ENCODE measurements at regions of chr14 and their contacts with region 1.

Region 1: GRCh38 chr14:92513204-92513973 is at the start of gene RIN3:
- DNase-seq: peak; percentile 70 to 82 (median 77)
- H3K4me3 ChIP-seq: peak within 1 kb of the TSS; percentile 65 to 92 (median 91)
- H3K4me3 Mint-ChIP-seq: peak within 1 kb of the TSS; percentile 86 to 89
- H3K27ac ChIP-seq: peak within 1 kb of the TSS; percentile 55 to 95
- H3K27ac Mint-ChIP-seq: peak within 1 kb of the TSS; percentile 57 to 92 (median 90)
- H3K4me1 ChIP-seq: peaks cover 39 to 70% of the 10 kb centered on the region in 2 donors
- H3K4me1 Mint-ChIP-seq: peaks cover 64% of the 10 kb centered on the region
- H3K27me3 ChIP-seq: peaks cover 0 to 12% of the 10 kb centered on the region in 2 donors
- H3K27me3 Mint-ChIP-seq: peaks cover 12 to 31% (median 30%) of the 10 kb centered on the region in 3 donors
- CTCF ChIP-seq: no peak
- polyA plus RNA-seq, gene RIN3: 42.8 to 144 (median 54.6) TPM

Region 2: GRCh38 chr14:92531106-92531873 is 17.9 kb after region 1 on chr14:
- intact Hi-C with region 1: loop called in 1 of 2 experiments (anchors 2 kb)
- DNase-seq: peak; percentile 83 to 95 (median 85)
- H3K4me3 ChIP-seq: no peak overlapping the region
- H3K4me3 Mint-ChIP-seq: peak overlapping the region in 1 of 2 donors; percentile 64
- H3K27ac ChIP-seq: peak overlapping the region; percentile 33 to 89
- H3K27ac Mint-ChIP-seq: peak overlapping the region; percentile 78 to 98 (median 92)
- H3K4me1 ChIP-seq: peaks cover 21 to 36% of the 10 kb centered on the region in 2 donors
- H3K4me1 Mint-ChIP-seq: peaks cover 48% of the 10 kb centered on the region
- H3K27me3 ChIP-seq: no peaks in the 10 kb centered on the region
- H3K27me3 Mint-ChIP-seq: peaks cover 0 to 7% (median 1%) of the 10 kb centered on the region in 3 donors
- CTCF ChIP-seq: no peak

Measured in CD14-positive monocyte (primary cell).